CD4-positive, alpha-beta T cell (primary cell): ENCODE measurements at regions of chr1 and their contacts with region 1.

Region 1: GRCh38 chr1:40802078-40802741 is 18.6 kb downstream of the KCNQ4 start:
- DNase-seq: peak; percentile 74 to 95 (median 85)
- ATAC-seq: peak; percentile 91
- H3K4me3 ChIP-seq: peak overlapping the region; percentile 53
- H3K4me3 Mint-ChIP-seq: peak overlapping the region; percentile 84
- H3K27ac ChIP-seq: peak overlapping the region; percentile 49 to 55
- H3K27ac Mint-ChIP-seq: peak overlapping the region; percentile 81
- H3K4me1 ChIP-seq: peaks cover 30% of the 10 kb centered on the region
- H3K4me1 Mint-ChIP-seq: peaks cover 32% of the 10 kb centered on the region
- H3K27me3 ChIP-seq: no peaks in the 10 kb centered on the region
- H3K27me3 Mint-ChIP-seq: no peaks in the 10 kb centered on the region
- CTCF ChIP-seq: no peak

Region 2: DNA sequence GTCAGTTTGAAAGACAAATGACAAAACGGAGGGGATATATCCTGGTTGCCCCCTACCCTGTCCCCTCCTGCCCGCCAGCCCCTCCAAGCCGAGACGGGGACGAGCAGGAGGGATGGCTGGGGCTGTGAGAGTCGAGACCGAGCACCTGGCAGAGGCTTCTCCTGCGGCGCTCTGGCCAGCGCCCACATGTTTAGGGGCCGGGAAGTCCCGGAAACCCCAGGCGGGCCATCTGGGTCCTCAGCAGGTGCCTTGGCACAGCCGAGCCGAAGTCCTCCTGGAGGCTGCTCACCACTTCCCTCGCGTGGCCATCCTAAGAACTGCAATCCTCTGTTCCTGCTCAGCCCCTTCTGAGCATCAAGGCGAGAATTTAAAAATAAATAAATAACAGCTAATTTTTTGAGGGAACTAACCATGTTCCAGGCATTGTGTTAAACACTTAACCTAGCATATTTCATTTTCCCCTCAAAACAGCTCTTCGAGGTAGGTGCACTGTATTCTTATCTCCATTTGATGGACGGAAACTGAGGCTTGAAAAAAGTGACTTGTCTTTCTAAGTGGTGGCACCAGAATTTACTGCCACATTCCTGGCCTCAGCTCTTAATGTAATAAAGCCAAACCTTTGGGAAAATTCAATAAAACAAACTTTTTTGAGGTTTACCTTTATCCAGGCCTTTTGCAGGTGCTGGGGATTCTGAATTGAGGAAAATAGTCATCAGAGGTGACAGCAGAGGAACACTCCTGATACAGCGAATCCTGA is 133.3 kb before region 1 on chr1:
- CTCF ChIA-PET with region 1: no interaction called
- POLR2A ChIA-PET with region 1: no interaction called
- intact Hi-C with region 1: loop called in 1 of 2 experiments (anchors 5 kb)
- DNase-seq: peak; percentile 72 to 91 (median 82)
- ATAC-seq: peak; percentile 78
- H3K4me3 ChIP-seq: peak overlapping the region; percentile 36
- H3K4me3 Mint-ChIP-seq: peak overlapping the region; percentile 69
- H3K27ac ChIP-seq: no peak overlapping the region
- H3K27ac Mint-ChIP-seq: no peak overlapping the region
- H3K4me1 ChIP-seq: peaks cover 23% of the 10 kb centered on the region
- H3K4me1 Mint-ChIP-seq: peaks cover 20% of the 10 kb centered on the region
- H3K27me3 ChIP-seq: no peaks in the 10 kb centered on the region
- H3K27me3 Mint-ChIP-seq: no peaks in the 10 kb centered on the region
- CTCF ChIP-seq: peak; percentile 94

Region 3: DNA sequence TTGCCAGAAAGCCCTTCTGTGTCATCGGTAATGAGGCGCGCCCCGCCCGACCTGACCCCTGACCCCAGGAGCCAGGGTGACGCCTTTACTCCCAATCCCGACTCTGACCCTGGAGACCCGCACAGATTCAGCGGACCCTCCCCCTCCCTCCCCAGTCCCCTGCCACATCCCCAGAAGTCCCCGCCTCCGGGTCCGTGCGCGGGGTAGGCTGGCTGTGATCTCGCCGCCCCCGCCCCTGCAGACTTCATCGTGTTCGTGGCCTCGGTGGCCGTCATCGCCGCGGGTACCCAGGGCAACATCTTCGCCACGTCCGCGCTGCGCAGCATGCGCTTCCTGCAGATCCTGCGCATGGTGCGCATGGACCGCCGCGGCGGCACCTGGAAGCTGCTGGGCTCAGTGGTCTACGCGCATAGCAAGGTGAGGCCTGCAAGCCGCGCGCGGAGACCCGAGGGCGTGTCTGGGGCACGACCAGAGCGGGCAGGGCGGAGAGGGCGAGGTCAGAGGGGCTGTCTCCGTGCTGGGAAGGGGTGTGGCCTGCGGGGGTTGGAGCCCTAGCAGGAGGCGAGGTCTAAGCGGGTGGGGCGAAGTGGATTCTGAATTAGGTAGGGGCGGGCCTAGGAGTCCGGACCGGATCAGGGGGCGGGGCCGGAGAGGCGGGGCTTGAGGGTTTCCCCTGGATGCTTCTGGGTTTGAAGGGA is 16.2 kb after region 1 on chr1:
- CTCF ChIA-PET with region 1: no interaction called
- POLR2A ChIA-PET with region 1: interaction called, 3 read pairs
- intact Hi-C with region 1: loop called (anchors 1 kb)
- DNase-seq: peak; percentile 80 to 95 (median 86)
- ATAC-seq: peak; percentile 96
- H3K4me3 ChIP-seq: peak overlapping the region; percentile 67
- H3K4me3 Mint-ChIP-seq: peak overlapping the region; percentile 92
- H3K27ac ChIP-seq: peak overlapping the region in 1 of 2 donors; percentile 41
- H3K27ac Mint-ChIP-seq: peak overlapping the region; percentile 88
- H3K4me1 ChIP-seq: peaks cover 18% of the 10 kb centered on the region
- H3K4me1 Mint-ChIP-seq: peaks cover 13% of the 10 kb centered on the region
- H3K27me3 ChIP-seq: no peaks in the 10 kb centered on the region
- H3K27me3 Mint-ChIP-seq: no peaks in the 10 kb centered on the region
- CTCF ChIP-seq: no peak

Region 4: DNA sequence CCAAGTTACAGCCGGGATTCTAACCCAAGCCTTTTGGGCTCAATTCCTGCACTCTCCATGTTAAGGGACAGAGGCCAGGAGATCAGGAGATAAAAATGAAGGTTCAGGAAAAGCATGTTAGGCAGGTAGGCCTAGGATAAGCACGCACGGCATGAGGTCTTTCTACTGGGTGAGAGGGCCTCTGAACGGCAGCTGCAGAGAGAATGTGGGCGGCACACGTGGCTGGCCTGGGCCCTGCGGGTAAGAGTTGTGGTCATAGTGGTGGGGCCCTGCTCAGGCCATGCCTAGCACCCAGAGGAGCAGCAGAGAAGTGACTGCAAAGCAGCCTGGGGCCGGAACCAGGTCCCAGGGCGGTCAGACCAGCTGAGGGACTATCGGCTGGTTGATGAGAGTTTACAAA is 551.5 kb after region 1 on chr1:
- CTCF ChIA-PET with region 1: no interaction called
- POLR2A ChIA-PET with region 1: no interaction called
- intact Hi-C with region 1: loop called in 1 of 2 experiments (anchors 10 kb)
- DNase-seq: peak in 1 of 14 experiments; percentile 20
- ATAC-seq: no peak
- H3K4me3 ChIP-seq: no peak overlapping the region
- H3K4me3 Mint-ChIP-seq: no peak overlapping the region
- H3K27ac ChIP-seq: no peak overlapping the region
- H3K27ac Mint-ChIP-seq: no peak overlapping the region
- H3K4me1 ChIP-seq: peaks cover 3% of the 10 kb centered on the region
- H3K4me1 Mint-ChIP-seq: no peaks in the 10 kb centered on the region
- H3K27me3 ChIP-seq: peaks cover 0 to 11% of the 10 kb centered on the region in 2 experiments
- H3K27me3 Mint-ChIP-seq: peaks cover 22% of the 10 kb centered on the region
- CTCF ChIP-seq: no peak